Activated naive CD4-positive, alpha-beta T cell treated with anti-CD3 and anti-CD28 coated beads for 36 hours (primary cell): ENCODE measurements at regions of chr1 and their contacts with region 1.

Region 1: GRCh38 chr1:200907611-200908097 is 13.0 kb downstream of the INAVA start:
- DNase-seq: no peak
- H3K4me3 Mint-ChIP-seq: no peak overlapping the region
- H3K27ac Mint-ChIP-seq: no peak overlapping the region
- H3K4me1 Mint-ChIP-seq: peaks cover 12% of the 10 kb centered on the region
- H3K27me3 Mint-ChIP-seq: peaks cover 2% of the 10 kb centered on the region

Region 2: DNA sequence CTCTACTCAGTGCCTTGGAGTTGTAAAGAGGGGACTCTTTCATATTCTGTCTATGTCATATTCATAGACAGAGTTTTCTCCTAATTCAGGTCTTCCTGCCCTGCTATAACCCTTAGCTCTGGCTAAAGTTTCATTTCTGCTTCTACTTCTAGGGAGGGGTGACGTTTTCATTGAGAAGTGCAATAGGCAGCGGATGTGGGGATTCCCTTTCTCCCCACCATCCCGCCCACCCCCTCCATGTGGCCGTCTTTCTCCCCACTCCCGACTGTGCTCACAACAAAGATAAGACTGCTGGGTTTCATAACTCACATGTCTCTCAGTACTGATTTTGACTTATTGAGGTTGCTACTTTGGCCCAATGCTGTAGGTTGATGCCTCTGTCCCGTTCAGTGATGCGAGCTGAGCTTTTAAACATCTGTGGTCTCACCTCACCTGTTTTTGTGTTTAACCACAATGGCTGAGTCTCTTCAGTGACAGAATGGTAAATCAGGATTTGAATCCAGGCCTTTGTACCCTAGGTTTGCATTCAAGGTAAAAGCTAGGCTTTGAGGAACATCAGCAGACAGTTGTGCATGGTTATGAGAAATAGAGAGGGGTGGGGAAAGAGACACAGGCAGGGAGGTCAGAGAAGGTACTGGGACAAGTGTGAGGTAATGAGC is 279.3 kb before region 1 on chr1:
- CTCF ChIA-PET with region 1: no interaction called
- intact Hi-C with region 1: loop called (anchors 5 kb)
- DNase-seq: peak; percentile 43
- H3K4me3 Mint-ChIP-seq: no peak overlapping the region
- H3K27ac Mint-ChIP-seq: no peak overlapping the region
- H3K4me1 Mint-ChIP-seq: peaks cover 32% of the 10 kb centered on the region
- H3K27me3 Mint-ChIP-seq: no peaks in the 10 kb centered on the region

Region 3: DNA sequence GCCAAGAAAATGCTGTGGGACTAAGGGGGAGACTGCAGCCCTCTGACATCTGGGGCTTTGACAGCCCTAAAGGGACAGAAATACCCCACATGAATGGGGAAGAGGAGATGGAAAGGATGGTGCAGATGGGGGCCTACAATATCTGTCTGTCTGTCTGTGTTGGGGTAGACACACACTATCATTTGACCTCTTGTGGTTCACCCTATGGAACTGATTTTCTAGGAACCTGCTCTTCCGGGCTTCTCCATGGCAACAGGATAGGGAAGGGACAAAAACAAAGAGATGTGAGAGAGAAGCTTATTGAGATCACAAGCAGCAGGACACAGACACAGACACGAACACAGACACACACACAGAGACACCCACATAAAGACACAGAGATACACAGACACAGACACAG is 98.8 kb after region 1 on chr1:
- CTCF ChIA-PET with region 1: no interaction called
- intact Hi-C with region 1: no loop called
- DNase-seq: no peak
- H3K4me3 Mint-ChIP-seq: no peak overlapping the region
- H3K27ac Mint-ChIP-seq: no peak overlapping the region
- H3K4me1 Mint-ChIP-seq: peaks cover 35% of the 10 kb centered on the region
- H3K27me3 Mint-ChIP-seq: no peaks in the 10 kb centered on the region